Mammary epithelial cell (primary cell): ENCODE measurements at regions of chr1 and their contacts with region 1.

Region 1: DNA sequence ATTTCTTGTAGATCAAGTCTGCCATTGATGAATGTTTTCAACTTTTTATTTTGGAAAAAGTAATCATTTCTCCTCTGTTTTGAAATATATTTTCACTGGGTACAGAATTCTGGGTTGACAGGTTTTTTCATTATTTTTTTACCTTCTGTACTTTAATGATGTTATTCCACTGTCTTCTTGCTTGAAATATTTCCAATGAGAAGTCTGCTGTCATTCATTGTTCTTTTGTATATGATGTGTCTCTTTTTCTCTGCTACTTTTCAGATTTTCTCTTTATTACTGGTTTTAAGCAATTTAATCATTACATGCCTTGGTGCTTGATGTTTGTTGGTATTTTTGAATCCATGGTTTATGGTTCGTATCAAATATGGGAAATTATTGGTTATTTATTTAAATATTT is 22.4 kb upstream of the FOXO6 start:
- DNase-seq: no peak
- H3K4me3 ChIP-seq: no peak overlapping the region
- H3K27ac ChIP-seq: no peak overlapping the region
- H3K4me1 ChIP-seq: no peaks in the 10 kb centered on the region
- H3K27me3 ChIP-seq: peaks cover 2% of the 10 kb centered on the region
- CTCF ChIP-seq: no peak

Region 2: DNA sequence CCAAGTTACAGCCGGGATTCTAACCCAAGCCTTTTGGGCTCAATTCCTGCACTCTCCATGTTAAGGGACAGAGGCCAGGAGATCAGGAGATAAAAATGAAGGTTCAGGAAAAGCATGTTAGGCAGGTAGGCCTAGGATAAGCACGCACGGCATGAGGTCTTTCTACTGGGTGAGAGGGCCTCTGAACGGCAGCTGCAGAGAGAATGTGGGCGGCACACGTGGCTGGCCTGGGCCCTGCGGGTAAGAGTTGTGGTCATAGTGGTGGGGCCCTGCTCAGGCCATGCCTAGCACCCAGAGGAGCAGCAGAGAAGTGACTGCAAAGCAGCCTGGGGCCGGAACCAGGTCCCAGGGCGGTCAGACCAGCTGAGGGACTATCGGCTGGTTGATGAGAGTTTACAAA is 14.9 kb after region 1 on chr1:
- CTCF ChIA-PET with region 1: no interaction called
- dilution Hi-C with region 1: no loop called
- in situ Hi-C with region 1: no loop called
- intact Hi-C with region 1: loop called (anchors 2 kb)
- DNase-seq: peak; percentile 74
- H3K4me3 ChIP-seq: no peak overlapping the region
- H3K27ac ChIP-seq: no peak overlapping the region
- H3K4me1 ChIP-seq: peaks cover 24% of the 10 kb centered on the region
- H3K27me3 ChIP-seq: no peaks in the 10 kb centered on the region
- CTCF ChIP-seq: no peak

Region 3: DNA sequence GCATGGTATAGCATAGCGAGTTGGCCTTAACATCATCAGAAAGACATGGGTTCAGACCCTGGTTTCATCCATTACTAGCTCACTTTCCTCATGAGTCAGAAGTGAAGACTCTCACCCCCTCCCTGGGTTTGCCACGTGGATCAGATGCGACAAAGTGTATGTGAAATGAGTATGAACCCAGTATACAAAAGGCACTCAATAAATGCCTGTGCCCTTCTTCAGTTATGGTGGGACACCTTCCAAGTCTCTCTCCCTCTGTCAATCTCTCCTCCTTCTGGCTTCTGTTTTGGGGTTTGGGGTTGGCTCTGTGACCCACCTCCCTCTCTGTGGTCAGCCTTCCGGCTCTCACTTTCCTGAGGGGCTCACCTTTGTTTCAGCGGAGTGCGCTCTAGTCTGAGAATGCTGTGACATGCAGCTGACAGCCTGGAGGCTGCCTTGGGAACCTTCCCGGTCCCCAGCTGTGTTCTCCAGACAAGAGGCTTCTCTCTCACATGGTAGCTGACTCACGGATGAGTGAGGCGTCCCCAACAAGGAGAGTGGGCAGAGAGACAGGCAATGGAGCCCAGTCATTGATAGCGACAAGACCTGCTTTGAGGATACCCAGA is 300.6 kb after region 1 on chr1:
- CTCF ChIA-PET with region 1: no interaction called
- dilution Hi-C with region 1: no loop called
- in situ Hi-C with region 1: no loop called
- intact Hi-C with region 1: no loop called
- DNase-seq: peak; percentile 65
- H3K4me3 ChIP-seq: no peak overlapping the region
- H3K27ac ChIP-seq: no peak overlapping the region
- H3K4me1 ChIP-seq: no peaks in the 10 kb centered on the region
- H3K27me3 ChIP-seq: no peaks in the 10 kb centered on the region
- CTCF ChIP-seq: no peak